ENCODE measurements at regions of chr7 and their contacts with region 1.

Region 1: GRCh38 chr7:84914598-84914997 is 272.3 kb downstream of the SEMA3D start:
- DNase-seq: no peak
- H3K4me3 ChIP-seq: no peak overlapping the region
- H3K27ac ChIP-seq: no peak overlapping the region
- H3K4me1 ChIP-seq: peaks cover 0 to 8% (median 5%) of the 10 kb centered on the region in 4 experiments; a peak in 3 of 7 replicates
- H3K27me3 ChIP-seq: no peaks in the 10 kb centered on the region
- CTCF ChIP-seq: peak in 2 of 3 experiments; percentile 26 to 39; a peak in 3 of 4 replicates
- EP300 ChIP-seq: no peak
- POLR2A ChIP-seq: no peak
- RAD21 ChIP-seq: peak; percentile 47 to 61

Region 2: GRCh38 chr7:84904561-84904960 is 10.0 kb before region 1 on chr7:
- CTCF ChIA-PET with region 1: no interaction called
- POLR2A ChIA-PET with region 1: no interaction called
- DNase-seq: no peak
- H3K4me3 ChIP-seq: no peak overlapping the region
- H3K27ac ChIP-seq: no peak overlapping the region
- H3K4me1 ChIP-seq: no peaks in the 10 kb centered on the region
- H3K27me3 ChIP-seq: no peaks in the 10 kb centered on the region
- CTCF ChIP-seq: no peak
- EP300 ChIP-seq: no peak
- POLR2A ChIP-seq: no peak
- RAD21 ChIP-seq: no peak

Region 3: GRCh38 chr7:85023045-85023712 is 108.6 kb after region 1 on chr7:
- CTCF ChIA-PET with region 1: interaction called, 10 read pairs
- POLR2A ChIA-PET with region 1: no interaction called
- DNase-seq: no peak
- H3K4me3 ChIP-seq: no peak overlapping the region
- H3K27ac ChIP-seq: no peak overlapping the region
- H3K4me1 ChIP-seq: peaks cover 0 to 10% (median 0%) of the 10 kb centered on the region in 4 experiments; a peak in 1 of 7 replicates
- H3K27me3 ChIP-seq: no peaks in the 10 kb centered on the region
- CTCF ChIP-seq: peak in 2 of 3 experiments; percentile 46 to 49; a peak in 2 of 4 replicates
- EP300 ChIP-seq: no peak
- POLR2A ChIP-seq: no peak
- RAD21 ChIP-seq: peak; percentile 79 to 84

Measured in H1 (cell line).